Activated T-helper 1 cell treated with anti-CD3 and anti-CD28 coated beads, Interleukin-12 subunit alpha, Interleukin-12 subunit beta, Interleukin-2, Interleukin-4 antibody, amounts not matched to agents 30 ng/mL and 10 ng/mL and 1 ng/mL, durations not matched to agents 14 hours and 24 hours and 36 hours (primary cell): ENCODE measurements at regions of chr2 and their contacts with region 1.

Region 1: GRCh38 chr2:224837558-224837957 is 121.4 kb upstream of the CCDC195 start:
- DNase-seq: no peak
- H3K4me3 Mint-ChIP-seq: no peak overlapping the region
- H3K27ac Mint-ChIP-seq: no peak overlapping the region
- H3K4me1 Mint-ChIP-seq: peaks cover 6% of the 10 kb centered on the region
- H3K27me3 Mint-ChIP-seq: no peaks in the 10 kb centered on the region

Region 2: DNA sequence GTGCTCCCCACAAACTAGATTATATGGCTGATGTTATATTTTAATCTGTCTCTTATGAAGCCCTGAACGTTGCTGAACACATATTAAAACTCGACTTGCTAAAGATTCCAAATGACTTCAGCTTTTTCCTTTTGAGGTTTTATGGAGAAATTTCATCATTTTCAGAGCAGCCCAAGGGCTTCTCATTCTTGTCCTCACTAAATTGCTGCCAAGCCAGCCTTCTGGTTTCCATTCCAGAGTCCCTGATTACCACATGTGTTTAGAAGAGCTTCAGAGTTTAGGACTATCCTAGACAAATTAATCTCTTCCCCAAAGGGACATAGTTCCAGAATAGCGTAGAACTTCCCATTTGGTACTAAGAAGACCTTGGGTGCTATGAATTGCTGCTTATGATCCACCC is 43.6 kb before region 1 on chr2:
- intact Hi-C with region 1: loop called (anchors 2 kb)
- DNase-seq: no peak
- H3K4me3 Mint-ChIP-seq: no peak overlapping the region
- H3K27ac Mint-ChIP-seq: peak overlapping the region; percentile 9
- H3K4me1 Mint-ChIP-seq: no peaks in the 10 kb centered on the region
- H3K27me3 Mint-ChIP-seq: no peaks in the 10 kb centered on the region

Region 3: GRCh38 chr2:224802407-224802806 is 35.2 kb before region 1 on chr2:
- intact Hi-C with region 1: loop called (anchors 5 kb)
- DNase-seq: no peak
- H3K4me3 Mint-ChIP-seq: no peak overlapping the region
- H3K27ac Mint-ChIP-seq: no peak overlapping the region
- H3K4me1 Mint-ChIP-seq: no peaks in the 10 kb centered on the region
- H3K27me3 Mint-ChIP-seq: no peaks in the 10 kb centered on the region

Region 4: GRCh38 chr2:224820283-224820991 is 17.1 kb before region 1 on chr2:
- intact Hi-C with region 1: no loop called
- DNase-seq: no peak
- H3K4me3 Mint-ChIP-seq: no peak overlapping the region
- H3K27ac Mint-ChIP-seq: no peak overlapping the region
- H3K4me1 Mint-ChIP-seq: no peaks in the 10 kb centered on the region
- H3K27me3 Mint-ChIP-seq: no peaks in the 10 kb centered on the region

Region 5: GRCh38 chr2:224849264-224849663 is 11.7 kb after region 1 on chr2:
- intact Hi-C with region 1: loop called (anchors 2 kb)
- DNase-seq: no peak
- H3K4me3 Mint-ChIP-seq: no peak overlapping the region
- H3K27ac Mint-ChIP-seq: no peak overlapping the region
- H3K4me1 Mint-ChIP-seq: peaks cover 12% of the 10 kb centered on the region
- H3K27me3 Mint-ChIP-seq: no peaks in the 10 kb centered on the region